ENCODE measurements at regions of chr3 and their contacts with region 1.

Region 1: GRCh38 chr3:161423911-161424522 is 52.7 kb upstream of the SPTSSB start:
- DNase-seq: peak in 1 of 2 experiments; percentile 59
- H3K4me3 ChIP-seq: no peak overlapping the region
- H3K27ac ChIP-seq: no peak overlapping the region
- H3K4me1 ChIP-seq: no peaks in the 10 kb centered on the region
- H3K27me3 ChIP-seq: no peaks in the 10 kb centered on the region
- CTCF ChIP-seq: peak; percentile 95

Region 2: DNA sequence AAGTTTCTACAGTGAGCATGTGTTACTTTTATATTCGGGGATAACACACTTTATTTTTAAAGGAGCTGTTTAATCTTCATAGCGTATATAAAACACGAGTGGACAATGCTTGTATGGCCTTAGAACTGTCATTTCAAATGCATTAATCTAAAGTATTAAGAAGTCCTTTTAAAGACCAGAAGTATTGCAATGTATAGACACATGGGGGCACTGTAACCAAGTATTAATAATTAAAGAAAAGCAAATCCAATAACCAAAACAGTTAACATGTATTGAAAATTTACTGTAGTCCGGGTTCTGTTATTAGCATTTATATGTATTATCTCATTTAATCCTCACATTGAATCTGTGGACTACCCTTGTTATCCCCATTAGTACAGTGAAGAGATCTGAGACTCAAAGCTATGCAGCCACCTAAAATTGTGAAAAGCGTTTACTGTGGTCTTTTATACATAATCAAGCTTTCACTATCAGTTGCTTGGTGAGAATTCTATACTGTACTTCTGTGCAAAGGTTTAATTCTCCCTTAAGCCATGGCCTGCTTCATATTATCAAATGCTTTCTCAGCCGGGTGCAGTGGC is 737.0 kb before region 1 on chr3:
- CTCF ChIA-PET with region 1: interaction called, 5 read pairs
- POLR2A ChIA-PET with region 1: no interaction called
- intact Hi-C with region 1: loop called (anchors 1 kb)
- DNase-seq: no peak
- H3K4me3 ChIP-seq: no peak overlapping the region
- H3K27ac ChIP-seq: no peak overlapping the region
- H3K4me1 ChIP-seq: no peaks in the 10 kb centered on the region
- H3K27me3 ChIP-seq: no peaks in the 10 kb centered on the region
- CTCF ChIP-seq: peak; percentile 73

Region 3: DNA sequence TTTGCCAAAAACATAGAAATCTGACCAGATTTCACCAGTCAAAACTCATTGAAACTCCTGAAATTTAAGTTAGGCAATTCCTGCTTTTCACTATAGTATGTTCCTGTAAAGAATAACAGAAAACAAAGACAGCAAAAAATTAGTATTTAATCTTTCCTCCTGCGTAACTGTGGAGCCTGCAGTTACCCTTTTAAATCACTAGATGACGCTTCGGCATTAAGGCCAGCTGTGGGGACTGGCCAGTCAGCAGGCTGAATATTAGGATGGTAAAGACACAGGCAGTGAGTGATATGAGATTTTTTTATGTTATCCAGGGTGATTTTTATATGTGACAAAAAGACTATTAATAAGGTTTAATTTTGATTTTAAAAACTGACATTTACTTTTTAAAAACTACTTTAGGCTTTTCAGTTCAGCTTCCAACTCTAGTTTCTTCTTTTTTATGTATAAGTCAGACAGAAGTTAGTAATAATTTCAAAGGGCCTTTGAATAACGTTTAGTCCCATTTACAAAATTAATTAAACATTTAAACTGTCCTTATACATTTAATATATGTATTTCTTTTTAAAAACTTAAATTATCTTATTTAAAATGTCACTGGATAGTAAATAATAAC is 502.9 kb before region 1 on chr3:
- CTCF ChIA-PET with region 1: no interaction called
- POLR2A ChIA-PET with region 1: no interaction called
- intact Hi-C with region 1: loop called (anchors 1 kb)
- DNase-seq: peak in 1 of 2 experiments; percentile 28
- H3K4me3 ChIP-seq: no peak overlapping the region
- H3K27ac ChIP-seq: no peak overlapping the region
- H3K4me1 ChIP-seq: no peaks in the 10 kb centered on the region
- H3K27me3 ChIP-seq: no peaks in the 10 kb centered on the region
- CTCF ChIP-seq: peak; percentile 91

Region 4: GRCh38 chr3:160956806-160957205 is 467.2 kb before region 1 on chr3:
- CTCF ChIA-PET with region 1: interaction called, 3 read pairs
- POLR2A ChIA-PET with region 1: no interaction called
- intact Hi-C with region 1: loop called (anchors 2 kb)
- DNase-seq: no peak
- H3K4me3 ChIP-seq: no peak overlapping the region
- H3K27ac ChIP-seq: no peak overlapping the region
- H3K4me1 ChIP-seq: no peaks in the 10 kb centered on the region
- H3K27me3 ChIP-seq: no peaks in the 10 kb centered on the region
- CTCF ChIP-seq: peak; percentile 67

Region 5: GRCh38 chr3:160973067-160973809 is 450.8 kb before region 1 on chr3:
- CTCF ChIA-PET with region 1: no interaction called
- POLR2A ChIA-PET with region 1: no interaction called
- intact Hi-C with region 1: no loop called
- DNase-seq: no peak
- H3K4me3 ChIP-seq: no peak overlapping the region
- H3K27ac ChIP-seq: no peak overlapping the region
- H3K4me1 ChIP-seq: no peaks in the 10 kb centered on the region
- H3K27me3 ChIP-seq: no peaks in the 10 kb centered on the region
- CTCF ChIP-seq: no peak

Region 6: GRCh38 chr3:161014843-161015749 is 408.9 kb before region 1 on chr3:
- CTCF ChIA-PET with region 1: no interaction called
- POLR2A ChIA-PET with region 1: no interaction called
- intact Hi-C with region 1: no loop called
- DNase-seq: no peak
- H3K4me3 ChIP-seq: no peak overlapping the region
- H3K27ac ChIP-seq: no peak overlapping the region
- H3K4me1 ChIP-seq: no peaks in the 10 kb centered on the region
- H3K27me3 ChIP-seq: no peaks in the 10 kb centered on the region
- CTCF ChIP-seq: no peak

Region 7: GRCh38 chr3:161274719-161275298 is 149.2 kb before region 1 on chr3:
- CTCF ChIA-PET with region 1: interaction called, 3 read pairs
- POLR2A ChIA-PET with region 1: no interaction called
- intact Hi-C with region 1: loop called (anchors 1 kb)
- DNase-seq: peak in 1 of 2 experiments; percentile 43
- H3K4me3 ChIP-seq: no peak overlapping the region
- H3K27ac ChIP-seq: no peak overlapping the region
- H3K4me1 ChIP-seq: no peaks in the 10 kb centered on the region
- H3K27me3 ChIP-seq: no peaks in the 10 kb centered on the region
- CTCF ChIP-seq: peak; percentile 71

Region 8: GRCh38 chr3:161644891-161645661 is 221.1 kb after region 1 on chr3:
- CTCF ChIA-PET with region 1: no interaction called
- POLR2A ChIA-PET with region 1: no interaction called
- intact Hi-C with region 1: no loop called
- DNase-seq: no peak
- H3K4me3 ChIP-seq: no peak overlapping the region
- H3K27ac ChIP-seq: no peak overlapping the region
- H3K4me1 ChIP-seq: no peaks in the 10 kb centered on the region
- H3K27me3 ChIP-seq: no peaks in the 10 kb centered on the region
- CTCF ChIP-seq: no peak